Caco-2 (cell line): ENCODE measurements at regions of chr13 and their contacts with region 1.

Region 1: GRCh38 chr13:21670883-21671619 is at the start of gene FGF9:
- DNase-seq: peak; percentile 76 to 89
- H3K4me3 ChIP-seq: peak within 1 kb of the TSS; percentile 80
- H3K4me3 Mint-ChIP-seq: peak within 1 kb of the TSS; percentile 98
- H3K27ac Mint-ChIP-seq: no peak within 1 kb of the TSS
- H3K4me1 ChIP-seq: peaks cover 26% of the 10 kb centered on the region
- H3K4me1 Mint-ChIP-seq: peaks cover 24% of the 10 kb centered on the region
- H3K27me3 ChIP-seq: peaks cover 3% of the 10 kb centered on the region; the same call in 1 of the 2 replicates
- H3K27me3 Mint-ChIP-seq: peaks cover 25% of the 10 kb centered on the region
- CTCF ChIP-seq: no peak
- total RNA-seq, gene FGF9: 1.0 and 1.1 TPM in 2 replicates

Region 2: DNA sequence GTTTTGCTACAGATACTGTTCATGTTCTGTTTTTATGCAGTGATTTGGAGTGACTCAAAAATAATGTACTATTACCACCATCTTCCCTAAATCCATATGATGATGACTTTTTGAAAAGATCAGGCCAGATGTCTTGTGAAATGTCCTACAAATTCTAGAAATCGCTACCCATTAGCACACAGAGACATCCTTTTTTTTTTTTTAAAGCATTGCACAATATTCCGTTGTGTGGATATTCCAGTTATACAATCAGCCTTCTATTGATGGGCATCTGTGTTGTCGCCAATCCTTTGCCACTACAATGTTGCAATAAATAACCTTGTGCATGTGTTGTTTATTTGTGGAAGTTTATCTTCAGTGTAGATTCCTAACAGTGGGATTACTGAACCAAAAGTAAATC is 236.5 kb before region 1 on chr13:
- CTCF ChIA-PET with region 1: no interaction called
- POLR2A ChIA-PET with region 1: no interaction called
- intact Hi-C with region 1: no loop called
- DNase-seq: no peak
- H3K4me3 ChIP-seq: no peak overlapping the region
- H3K4me3 Mint-ChIP-seq: no peak overlapping the region
- H3K27ac Mint-ChIP-seq: no peak overlapping the region
- H3K4me1 ChIP-seq: 0 out of 2 replicates have a peak, but pooled peaks cover 8% of the 10 kb centered on the region
- H3K4me1 Mint-ChIP-seq: peaks cover 6% of the 10 kb centered on the region
- H3K27me3 ChIP-seq: no peaks in the 10 kb centered on the region
- H3K27me3 Mint-ChIP-seq: no peaks in the 10 kb centered on the region
- CTCF ChIP-seq: no peak

Region 3: DNA sequence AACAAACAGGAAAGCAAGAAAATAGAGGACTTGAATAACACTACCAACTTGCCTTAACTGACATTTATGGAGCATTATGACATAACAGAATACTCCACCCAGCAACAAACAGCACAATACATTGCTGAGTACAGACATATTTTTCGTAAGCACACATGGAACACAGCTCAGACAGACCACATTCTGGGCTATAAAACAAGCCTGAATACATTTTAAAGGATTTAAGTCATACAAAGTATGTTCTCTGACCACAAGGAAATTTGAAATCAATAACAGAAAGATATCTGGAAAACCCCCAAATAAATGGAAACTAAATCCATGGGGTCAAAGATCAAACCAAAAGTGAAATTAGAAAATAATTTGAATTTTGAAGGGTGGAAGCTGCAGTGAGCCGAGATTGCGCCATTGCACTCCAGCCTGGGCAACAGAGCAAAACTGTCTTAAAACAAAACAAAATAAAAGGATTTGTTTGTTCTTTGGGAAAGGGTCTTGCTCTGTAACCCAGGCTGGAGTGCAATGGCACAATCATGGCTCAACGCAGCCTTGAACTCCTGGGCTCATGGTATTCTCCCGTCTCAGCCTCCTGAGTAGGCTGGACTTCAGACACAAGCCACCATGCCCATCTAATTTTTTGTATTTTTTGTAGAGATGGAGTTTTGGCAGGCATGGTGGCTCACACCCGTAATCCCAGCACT is 217.5 kb before region 1 on chr13:
- CTCF ChIA-PET with region 1: no interaction called
- POLR2A ChIA-PET with region 1: no interaction called
- intact Hi-C with region 1: no loop called
- DNase-seq: no peak
- H3K4me3 ChIP-seq: no peak overlapping the region
- H3K4me3 Mint-ChIP-seq: no peak overlapping the region
- H3K27ac Mint-ChIP-seq: no peak overlapping the region
- H3K4me1 ChIP-seq: peaks cover 15% of the 10 kb centered on the region; the same call in 1 of the 2 replicates
- H3K4me1 Mint-ChIP-seq: no peaks in the 10 kb centered on the region
- H3K27me3 ChIP-seq: no peaks in the 10 kb centered on the region
- H3K27me3 Mint-ChIP-seq: no peaks in the 10 kb centered on the region
- CTCF ChIP-seq: no peak

Region 4: GRCh38 chr13:21638319-21639282 is 32.5 kb before region 1 on chr13:
- CTCF ChIA-PET with region 1: interaction called, 16 read pairs
- POLR2A ChIA-PET with region 1: no interaction called
- intact Hi-C with region 1: loop called (anchors 1 kb)
- DNase-seq: peak in 1 of 2 experiments; percentile 45
- H3K4me3 ChIP-seq: no peak overlapping the region
- H3K4me3 Mint-ChIP-seq: no peak overlapping the region
- H3K27ac Mint-ChIP-seq: no peak overlapping the region
- H3K4me1 ChIP-seq: peaks cover 10% of the 10 kb centered on the region
- H3K4me1 Mint-ChIP-seq: peaks cover 9% of the 10 kb centered on the region
- H3K27me3 ChIP-seq: no peaks in the 10 kb centered on the region
- H3K27me3 Mint-ChIP-seq: no peaks in the 10 kb centered on the region
- CTCF ChIP-seq: peak; percentile 65 to 86

Region 5: DNA sequence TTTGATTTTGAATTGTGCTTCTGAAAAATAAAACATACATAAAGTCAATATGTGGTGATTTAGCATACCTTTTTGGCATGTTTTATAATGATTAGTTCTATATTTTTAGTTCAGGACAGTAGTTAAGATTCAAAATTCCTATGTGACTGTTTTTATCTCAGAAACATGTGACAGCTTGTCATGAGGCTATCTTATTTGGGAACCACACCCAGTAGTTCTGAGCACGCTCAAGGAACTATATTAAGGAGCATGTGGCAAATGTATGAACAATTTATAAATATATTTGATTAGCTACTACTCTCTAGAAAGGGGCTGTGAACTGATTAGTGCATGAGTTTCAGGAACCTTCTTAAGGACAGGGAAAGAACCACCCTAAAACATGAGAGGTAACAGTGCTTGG is 38.6 kb after region 1 on chr13:
- CTCF ChIA-PET with region 1: no interaction called
- POLR2A ChIA-PET with region 1: no interaction called
- intact Hi-C with region 1: no loop called
- DNase-seq: no peak
- H3K4me3 ChIP-seq: no peak overlapping the region
- H3K4me3 Mint-ChIP-seq: no peak overlapping the region
- H3K27ac Mint-ChIP-seq: no peak overlapping the region
- H3K4me1 ChIP-seq: no peaks in the 10 kb centered on the region
- H3K4me1 Mint-ChIP-seq: peaks cover 6% of the 10 kb centered on the region
- H3K27me3 ChIP-seq: no peaks in the 10 kb centered on the region
- H3K27me3 Mint-ChIP-seq: peaks cover 3% of the 10 kb centered on the region
- CTCF ChIP-seq: no peak

Region 6: DNA sequence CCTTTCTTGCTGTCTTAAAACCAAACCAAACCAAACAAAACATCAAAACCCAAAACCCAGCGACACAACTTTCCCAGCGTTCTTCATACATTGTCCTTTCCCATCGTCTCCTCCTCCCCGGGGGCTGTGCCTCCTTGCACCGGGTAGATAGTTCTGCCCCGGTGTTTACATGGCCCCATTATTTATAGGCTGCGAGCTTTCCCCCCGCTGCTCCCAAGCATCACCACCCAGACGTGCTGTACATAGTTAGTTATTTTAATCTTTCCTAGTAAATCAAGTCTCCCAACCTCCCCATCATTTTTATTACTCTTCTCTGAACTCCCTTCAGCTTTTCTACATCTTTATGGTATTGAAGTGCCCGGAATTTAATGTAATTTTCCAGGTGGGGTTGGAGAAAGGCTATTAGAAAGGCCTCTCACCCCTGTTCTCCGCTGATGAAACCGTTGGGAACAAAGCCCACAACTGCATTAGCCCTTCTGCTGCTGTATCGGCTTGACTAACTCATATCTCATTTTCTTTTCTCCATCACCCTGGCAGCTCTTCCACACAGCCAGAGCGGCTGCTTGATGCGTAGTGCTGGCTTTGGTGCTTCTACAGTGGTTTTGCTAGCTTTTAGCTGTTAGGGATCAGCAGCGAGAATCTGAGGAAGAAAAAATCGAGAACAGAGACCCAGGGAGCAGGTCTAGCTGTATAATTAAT is 52.9 kb after region 1 on chr13:
- CTCF ChIA-PET with region 1: interaction called, 10 read pairs
- POLR2A ChIA-PET with region 1: no interaction called
- intact Hi-C with region 1: no loop called
- DNase-seq: no peak
- H3K4me3 ChIP-seq: no peak overlapping the region
- H3K4me3 Mint-ChIP-seq: no peak overlapping the region
- H3K27ac Mint-ChIP-seq: no peak overlapping the region
- H3K4me1 ChIP-seq: peaks cover 5% of the 10 kb centered on the region; the same call in 1 of the 2 replicates
- H3K4me1 Mint-ChIP-seq: peaks cover 12% of the 10 kb centered on the region
- H3K27me3 ChIP-seq: no peaks in the 10 kb centered on the region
- H3K27me3 Mint-ChIP-seq: no peaks in the 10 kb centered on the region
- CTCF ChIP-seq: no peak

Region 7: GRCh38 chr13:21739316-21740170 is 68.5 kb after region 1 on chr13:
- CTCF ChIA-PET with region 1: interaction called, 3 read pairs
- POLR2A ChIA-PET with region 1: no interaction called
- intact Hi-C with region 1: loop called (anchors 5 kb)
- DNase-seq: no peak
- H3K4me3 ChIP-seq: no peak overlapping the region
- H3K4me3 Mint-ChIP-seq: no peak overlapping the region
- H3K27ac Mint-ChIP-seq: no peak overlapping the region
- H3K4me1 ChIP-seq: peaks cover 32% of the 10 kb centered on the region
- H3K4me1 Mint-ChIP-seq: no peaks in the 10 kb centered on the region
- H3K27me3 ChIP-seq: no peaks in the 10 kb centered on the region
- H3K27me3 Mint-ChIP-seq: no peaks in the 10 kb centered on the region
- CTCF ChIP-seq: no peak

Region 8: GRCh38 chr13:21767025-21767424 is 96.0 kb after region 1 on chr13:
- CTCF ChIA-PET with region 1: no interaction called
- POLR2A ChIA-PET with region 1: no interaction called
- intact Hi-C with region 1: loop called (anchors 5 kb)
- DNase-seq: no peak
- H3K4me3 ChIP-seq: no peak overlapping the region
- H3K4me3 Mint-ChIP-seq: no peak overlapping the region
- H3K27ac Mint-ChIP-seq: no peak overlapping the region
- H3K4me1 ChIP-seq: peaks cover 3% of the 10 kb centered on the region
- H3K4me1 Mint-ChIP-seq: peaks cover 7% of the 10 kb centered on the region
- H3K27me3 ChIP-seq: no peaks in the 10 kb centered on the region; the same call in 1 of the 2 replicates
- H3K27me3 Mint-ChIP-seq: no peaks in the 10 kb centered on the region
- CTCF ChIP-seq: no peak

Region 9: GRCh38 chr13:21837841-21838551 is 166.9 kb after region 1 on chr13:
- CTCF ChIA-PET with region 1: no interaction called
- POLR2A ChIA-PET with region 1: no interaction called
- intact Hi-C with region 1: loop called (anchors 5 kb)
- DNase-seq: peak in 1 of 2 experiments; percentile 25
- H3K4me3 ChIP-seq: 0 out of 2 replicates have a peak overlapping the region, but pooled peaks have one; percentile 8
- H3K4me3 Mint-ChIP-seq: peak overlapping the region; percentile 87
- H3K27ac Mint-ChIP-seq: peak overlapping the region; percentile 96
- H3K4me1 ChIP-seq: peaks cover 27% of the 10 kb centered on the region
- H3K4me1 Mint-ChIP-seq: peaks cover 43% of the 10 kb centered on the region
- H3K27me3 ChIP-seq: no peaks in the 10 kb centered on the region
- H3K27me3 Mint-ChIP-seq: no peaks in the 10 kb centered on the region
- CTCF ChIP-seq: peak; percentile 26 to 35

Region 10: DNA sequence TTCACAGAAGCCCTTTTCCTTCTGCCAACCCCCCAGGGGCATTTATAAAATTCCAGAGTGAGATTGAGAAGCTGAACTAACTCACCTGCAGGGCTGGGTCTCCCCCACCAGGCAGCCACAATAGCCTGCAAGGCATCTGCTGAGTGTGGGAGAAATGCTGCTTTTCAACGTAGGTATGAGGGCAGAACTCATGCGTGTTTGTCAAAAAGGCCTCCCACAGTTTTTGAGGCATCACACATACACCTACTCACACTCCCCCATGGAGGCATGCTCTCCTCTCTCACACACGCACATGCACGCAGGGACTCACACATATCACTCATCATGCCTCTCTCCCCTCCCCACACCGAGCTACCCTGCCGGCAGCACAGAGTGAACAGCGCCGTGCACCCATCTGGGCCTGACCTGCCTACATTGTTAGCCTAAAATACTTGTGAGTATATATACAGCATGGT is 390.3 kb after region 1 on chr13:
- CTCF ChIA-PET with region 1: no interaction called
- POLR2A ChIA-PET with region 1: no interaction called
- intact Hi-C with region 1: loop called (anchors 10 kb)
- DNase-seq: peak in 1 of 2 experiments; percentile 32
- H3K4me3 ChIP-seq: no peak overlapping the region
- H3K4me3 Mint-ChIP-seq: no peak overlapping the region
- H3K27ac Mint-ChIP-seq: peak overlapping the region; percentile 57
- H3K4me1 ChIP-seq: peaks cover 24% of the 10 kb centered on the region
- H3K4me1 Mint-ChIP-seq: peaks cover 17% of the 10 kb centered on the region
- H3K27me3 ChIP-seq: no peaks in the 10 kb centered on the region
- H3K27me3 Mint-ChIP-seq: no peaks in the 10 kb centered on the region
- CTCF ChIP-seq: no peak